ENCODE measurements at regions of chr3 and their contacts with region 1.

Region 1: DNA sequence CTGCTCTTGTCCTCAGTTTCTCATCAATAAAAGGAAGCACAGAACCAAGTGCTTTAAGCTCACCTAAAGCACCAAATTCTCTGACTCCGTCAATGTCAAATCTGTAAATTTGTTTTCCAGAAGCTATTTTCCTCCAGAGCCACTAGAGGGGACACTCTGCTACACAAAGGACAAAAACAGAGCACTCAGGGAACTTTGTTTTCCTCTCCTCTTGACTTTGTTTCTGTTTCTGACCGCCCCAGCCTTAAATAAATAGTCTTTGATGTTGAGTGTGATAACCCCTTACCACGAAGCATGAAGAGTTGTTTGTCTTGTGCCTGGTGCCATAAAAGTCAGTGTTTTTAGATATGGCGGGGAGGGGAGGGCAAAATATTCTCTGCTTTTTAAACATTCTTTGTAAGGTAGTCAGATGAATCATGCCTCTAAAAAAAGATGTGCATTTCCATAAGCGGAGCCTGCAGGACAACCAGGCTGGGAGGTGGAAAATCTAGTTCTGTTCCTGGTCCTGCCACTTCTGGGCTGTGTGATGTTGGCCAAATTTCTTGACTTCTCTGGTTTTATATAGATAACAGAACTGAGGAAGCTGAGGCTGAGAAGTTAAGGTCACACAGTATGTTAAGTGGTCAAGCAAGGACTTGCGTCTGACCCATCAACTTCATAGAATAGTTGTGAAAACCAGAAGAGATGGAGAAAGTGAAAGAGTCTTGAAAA is 7.3 kb upstream of the ZBTB38 start:
- DNase-seq: peak; percentile 42
- ATAC-seq: peak; percentile 65
- H3K4me3 Mint-ChIP-seq: no peak overlapping the region
- H3K27ac Mint-ChIP-seq: no peak overlapping the region
- H3K4me1 Mint-ChIP-seq: peaks cover 11% of the 10 kb centered on the region
- H3K27me3 Mint-ChIP-seq: peaks cover 10% of the 10 kb centered on the region

Region 2: GRCh38 chr3:141303481-141304223 is 57.4 kb before region 1 on chr3:
- CTCF ChIA-PET with region 1: interaction called, 13 read pairs
- POLR2A ChIA-PET with region 1: no interaction called
- DNase-seq: peak; percentile 83
- ATAC-seq: peak; percentile 74
- H3K4me3 Mint-ChIP-seq: no peak overlapping the region
- H3K27ac Mint-ChIP-seq: no peak overlapping the region
- H3K4me1 Mint-ChIP-seq: peaks cover 53% of the 10 kb centered on the region
- H3K27me3 Mint-ChIP-seq: peaks cover 2% of the 10 kb centered on the region

Region 3: DNA sequence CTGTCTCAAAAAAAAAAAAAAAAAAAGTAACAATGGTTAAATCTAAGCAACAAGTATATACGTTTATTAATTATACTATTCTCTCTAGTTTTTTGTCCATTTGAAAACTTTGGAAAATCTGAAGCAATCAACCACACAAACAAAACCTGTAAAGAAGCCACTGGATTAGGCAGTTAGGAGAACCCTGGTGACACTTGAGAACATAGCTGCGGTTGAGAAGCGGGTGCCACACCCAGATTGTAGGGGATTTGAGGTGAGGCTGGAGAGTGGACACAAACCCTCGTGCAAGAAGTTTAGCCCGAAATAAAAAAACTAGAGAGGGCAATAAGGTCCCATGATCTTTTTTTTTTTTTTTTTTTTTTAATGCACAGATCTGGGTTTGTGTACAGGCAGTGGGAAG is 18.7 kb before region 1 on chr3:
- CTCF ChIA-PET with region 1: interaction called, 10 read pairs
- POLR2A ChIA-PET with region 1: no interaction called
- DNase-seq: no peak
- ATAC-seq: no peak
- H3K4me3 Mint-ChIP-seq: no peak overlapping the region
- H3K27ac Mint-ChIP-seq: no peak overlapping the region
- H3K4me1 Mint-ChIP-seq: no peaks in the 10 kb centered on the region
- H3K27me3 Mint-ChIP-seq: peaks cover 10% of the 10 kb centered on the region

Region 4: GRCh38 chr3:141402476-141403171 is 41.6 kb after region 1 on chr3:
- CTCF ChIA-PET with region 1: interaction called, 10 read pairs
- POLR2A ChIA-PET with region 1: no interaction called
- DNase-seq: peak; percentile 60
- ATAC-seq: peak; percentile 78
- H3K4me3 Mint-ChIP-seq: peak overlapping the region; percentile 86
- H3K27ac Mint-ChIP-seq: peak overlapping the region; percentile 89
- H3K4me1 Mint-ChIP-seq: peaks cover 35% of the 10 kb centered on the region
- H3K27me3 Mint-ChIP-seq: no peaks in the 10 kb centered on the region

Region 5: GRCh38 chr3:141431411-141432378 is 70.7 kb after region 1 on chr3:
- CTCF ChIA-PET with region 1: interaction called, 14 read pairs
- POLR2A ChIA-PET with region 1: no interaction called
- DNase-seq: no peak
- ATAC-seq: no peak
- H3K4me3 Mint-ChIP-seq: no peak overlapping the region
- H3K27ac Mint-ChIP-seq: no peak overlapping the region
- H3K4me1 Mint-ChIP-seq: no peaks in the 10 kb centered on the region
- H3K27me3 Mint-ChIP-seq: no peaks in the 10 kb centered on the region

Region 6: DNA sequence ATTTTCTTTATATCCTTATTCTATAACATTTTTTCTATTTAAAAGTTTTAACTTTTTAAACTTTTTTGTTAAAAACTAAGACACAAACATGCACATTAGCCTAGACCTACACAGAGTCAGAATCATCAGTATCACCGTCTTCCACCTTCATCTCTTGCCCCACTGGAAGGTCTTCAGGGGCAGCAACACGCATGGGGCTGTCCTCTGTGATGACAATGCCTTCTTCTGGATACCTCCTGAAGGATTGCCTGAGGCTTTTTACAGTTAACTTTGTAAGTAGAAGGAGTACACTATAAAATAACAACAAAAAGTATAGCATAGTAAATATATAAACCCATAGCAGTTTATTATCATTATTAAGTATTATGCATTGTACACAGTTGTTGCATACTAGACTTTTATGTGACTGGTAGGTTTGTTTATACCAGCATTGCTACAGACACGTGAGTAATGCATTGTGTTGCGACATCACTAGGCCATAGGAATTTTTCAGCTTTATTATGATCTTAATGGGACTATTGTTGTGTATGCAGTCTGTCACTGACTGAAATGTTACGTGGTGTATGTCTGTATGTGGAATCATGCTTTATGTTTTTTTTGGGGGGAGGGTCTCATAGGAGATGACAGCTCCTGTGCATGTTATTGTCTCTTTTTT is 533.6 kb after region 1 on chr3:
- CTCF ChIA-PET with region 1: no interaction called
- POLR2A ChIA-PET with region 1: no interaction called
- DNase-seq: no peak
- ATAC-seq: no peak
- H3K4me3 Mint-ChIP-seq: no peak overlapping the region
- H3K27ac Mint-ChIP-seq: no peak overlapping the region
- H3K4me1 Mint-ChIP-seq: peaks cover 8% of the 10 kb centered on the region
- H3K27me3 Mint-ChIP-seq: no peaks in the 10 kb centered on the region